HepG2 (cell line): ENCODE measurements at regions of chr6 and their contacts with region 1.

Region 1: GRCh38 chr6:111423960-111424846 is 58.8 kb downstream of the REV3L start:
- DNase-seq: no peak
- ATAC-seq: peak; percentile 47
- H3K4me3 ChIP-seq: no peak overlapping the region
- H3K27ac ChIP-seq: peak overlapping the region; percentile 11
- H3K4me1 ChIP-seq: peaks cover 46% of the 10 kb centered on the region
- H3K27me3 ChIP-seq: no peaks in the 10 kb centered on the region
- CTCF ChIP-seq: no peak
- EP300 ChIP-seq: no peak
- POLR2A ChIP-seq: no peak
- RAD21 ChIP-seq: no peak

Region 2: DNA sequence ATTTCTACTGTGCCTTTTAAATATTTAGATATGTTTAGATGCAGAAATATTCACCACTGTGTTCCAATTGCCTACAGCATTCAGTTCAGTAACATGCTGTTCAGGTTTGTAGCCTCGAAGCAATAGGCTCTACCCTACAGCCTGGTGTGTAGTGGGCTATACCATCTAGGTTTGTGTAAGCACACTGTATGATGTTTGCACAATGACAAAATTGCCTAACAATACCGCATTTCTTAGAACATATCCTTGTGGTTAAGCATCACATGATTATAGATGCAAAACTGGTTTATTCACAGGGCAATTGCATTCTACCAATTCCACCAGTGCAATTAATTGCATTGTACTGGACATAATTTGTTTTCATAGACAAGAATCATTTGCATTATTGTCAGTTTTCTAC is 939.9 kb before region 1 on chr6:
- CTCF ChIA-PET with region 1: no interaction called
- POLR2A ChIA-PET with region 1: no interaction called
- in situ Hi-C with region 1: no loop called
- intact Hi-C with region 1: no loop called
- DNase-seq: no peak
- ATAC-seq: no peak
- H3K4me3 ChIP-seq: no peak overlapping the region
- H3K27ac ChIP-seq: no peak overlapping the region
- H3K4me1 ChIP-seq: no peaks in the 10 kb centered on the region
- H3K27me3 ChIP-seq: no peaks in the 10 kb centered on the region
- CTCF ChIP-seq: no peak
- EP300 ChIP-seq: no peak
- POLR2A ChIP-seq: no peak
- RAD21 ChIP-seq: no peak

Region 3: DNA sequence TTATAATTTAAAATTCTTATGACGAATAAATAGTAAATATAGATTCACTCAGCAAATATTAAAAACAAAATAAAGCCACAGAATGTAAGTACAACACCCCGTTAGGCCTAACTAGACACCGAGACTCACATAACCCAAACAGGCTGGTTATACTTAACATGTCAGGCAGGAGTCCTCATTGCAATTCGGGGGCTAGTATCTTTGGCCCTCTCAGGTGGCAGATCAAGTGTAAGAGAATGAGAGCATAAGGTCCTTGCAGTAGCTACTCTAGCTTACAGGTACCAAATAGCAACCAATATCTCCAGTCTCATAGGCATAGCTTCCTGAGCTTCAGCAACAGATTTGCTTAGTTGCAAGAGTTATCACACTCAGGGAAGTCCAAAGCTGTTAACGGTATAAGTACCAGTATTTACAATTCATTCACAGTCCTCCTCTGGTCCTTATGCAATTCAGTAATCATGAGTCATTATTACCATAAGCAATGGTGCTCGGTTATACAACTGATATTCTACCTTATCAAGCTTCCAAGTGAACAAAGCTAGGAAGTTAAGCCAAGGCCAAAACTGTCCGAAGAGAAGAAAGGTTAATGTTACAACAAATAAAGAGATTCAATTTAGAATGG is 38.7 kb after region 1 on chr6:
- CTCF ChIA-PET with region 1: no interaction called
- POLR2A ChIA-PET with region 1: no interaction called
- in situ Hi-C with region 1: no loop called
- intact Hi-C with region 1: loop called (anchors 5 kb)
- DNase-seq: peak; percentile 59
- ATAC-seq: peak; percentile 63
- H3K4me3 ChIP-seq: no peak overlapping the region
- H3K27ac ChIP-seq: peak overlapping the region; percentile 5
- H3K4me1 ChIP-seq: peaks cover 33% of the 10 kb centered on the region
- H3K27me3 ChIP-seq: no peaks in the 10 kb centered on the region
- CTCF ChIP-seq: no peak
- EP300 ChIP-seq: no peak
- POLR2A ChIP-seq: no peak
- RAD21 ChIP-seq: no peak